ENCODE measurements at regions of chr5 and their contacts with region 1.

Region 1: DNA sequence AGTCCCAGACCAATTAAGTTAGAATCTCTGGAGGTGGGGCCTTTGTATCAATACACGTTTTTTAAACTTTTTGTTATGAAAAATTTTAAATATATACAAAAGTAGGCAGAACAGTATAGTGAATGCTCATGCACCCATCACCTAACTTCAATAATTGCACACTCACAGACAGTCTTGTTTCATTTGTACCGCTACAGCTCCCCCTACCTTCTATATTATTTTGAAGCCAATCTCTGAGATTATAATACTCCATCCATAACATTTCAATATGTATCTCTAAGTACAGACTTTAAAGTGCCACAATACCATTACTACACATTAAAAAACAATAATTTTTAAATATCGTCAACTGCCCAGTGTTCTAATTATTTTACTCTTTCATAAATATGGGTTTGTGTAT is 32.9 kb downstream of the ISL1 start:
- DNase-seq: no peak
- H3K4me3 ChIP-seq: no peak overlapping the region
- H3K4me3 Mint-ChIP-seq: no peak overlapping the region
- H3K27ac Mint-ChIP-seq: no peak overlapping the region
- H3K4me1 ChIP-seq: no peaks in the 10 kb centered on the region
- H3K4me1 Mint-ChIP-seq: no peaks in the 10 kb centered on the region
- H3K27me3 ChIP-seq: no peaks in the 10 kb centered on the region
- H3K27me3 Mint-ChIP-seq: no peaks in the 10 kb centered on the region
- CTCF ChIP-seq: peak in 1 of 2 experiments; percentile 5

Region 2: GRCh38 chr5:50995272-50995942 is 420.7 kb before region 1 on chr5:
- CTCF ChIA-PET with region 1: no interaction called
- POLR2A ChIA-PET with region 1: no interaction called
- intact Hi-C with region 1: loop called (anchors 1 kb)
- DNase-seq: no peak
- H3K4me3 ChIP-seq: no peak overlapping the region
- H3K4me3 Mint-ChIP-seq: no peak overlapping the region
- H3K27ac Mint-ChIP-seq: no peak overlapping the region
- H3K4me1 ChIP-seq: no peaks in the 10 kb centered on the region; the same call in 1 of the 2 replicates
- H3K4me1 Mint-ChIP-seq: no peaks in the 10 kb centered on the region
- H3K27me3 ChIP-seq: no peaks in the 10 kb centered on the region
- H3K27me3 Mint-ChIP-seq: no peaks in the 10 kb centered on the region
- CTCF ChIP-seq: no peak

Region 3: DNA sequence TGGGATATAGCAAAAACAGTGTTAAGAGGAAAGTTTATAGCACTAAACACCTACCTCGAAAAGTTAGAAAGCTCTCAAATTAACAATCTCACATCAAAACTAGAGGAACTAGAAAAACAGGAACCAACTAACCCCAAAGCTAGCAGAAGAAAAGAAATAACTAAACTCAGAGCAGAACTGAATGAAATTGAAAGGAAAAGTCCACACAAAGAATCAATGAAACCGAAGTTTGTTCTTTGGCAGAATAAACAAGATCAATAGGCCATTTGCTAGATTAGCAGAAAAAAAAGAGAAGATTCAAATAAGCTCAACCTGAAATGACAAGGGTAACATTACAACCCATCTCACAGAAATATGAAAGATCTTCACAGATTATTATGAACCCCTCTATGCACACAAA is 267.7 kb before region 1 on chr5:
- CTCF ChIA-PET with region 1: no interaction called
- POLR2A ChIA-PET with region 1: no interaction called
- intact Hi-C with region 1: loop called (anchors 5 kb)
- DNase-seq: no peak
- H3K4me3 ChIP-seq: no peak overlapping the region
- H3K4me3 Mint-ChIP-seq: no peak overlapping the region
- H3K27ac Mint-ChIP-seq: no peak overlapping the region
- H3K4me1 ChIP-seq: no peaks in the 10 kb centered on the region
- H3K4me1 Mint-ChIP-seq: no peaks in the 10 kb centered on the region
- H3K27me3 ChIP-seq: no peaks in the 10 kb centered on the region
- H3K27me3 Mint-ChIP-seq: peaks cover 7% of the 10 kb centered on the region
- CTCF ChIP-seq: no peak

Region 4: GRCh38 chr5:51172903-51173626 is 243.1 kb before region 1 on chr5:
- CTCF ChIA-PET with region 1: no interaction called
- POLR2A ChIA-PET with region 1: no interaction called
- intact Hi-C with region 1: no loop called
- DNase-seq: no peak
- H3K4me3 ChIP-seq: no peak overlapping the region
- H3K4me3 Mint-ChIP-seq: no peak overlapping the region
- H3K27ac Mint-ChIP-seq: no peak overlapping the region
- H3K4me1 ChIP-seq: no peaks in the 10 kb centered on the region
- H3K4me1 Mint-ChIP-seq: no peaks in the 10 kb centered on the region
- H3K27me3 ChIP-seq: no peaks in the 10 kb centered on the region
- H3K27me3 Mint-ChIP-seq: no peaks in the 10 kb centered on the region
- CTCF ChIP-seq: no peak

Measured in Caco-2 (cell line).